ENCODE measurements at regions of chr13 and their contacts with region 1.

Region 1: DNA sequence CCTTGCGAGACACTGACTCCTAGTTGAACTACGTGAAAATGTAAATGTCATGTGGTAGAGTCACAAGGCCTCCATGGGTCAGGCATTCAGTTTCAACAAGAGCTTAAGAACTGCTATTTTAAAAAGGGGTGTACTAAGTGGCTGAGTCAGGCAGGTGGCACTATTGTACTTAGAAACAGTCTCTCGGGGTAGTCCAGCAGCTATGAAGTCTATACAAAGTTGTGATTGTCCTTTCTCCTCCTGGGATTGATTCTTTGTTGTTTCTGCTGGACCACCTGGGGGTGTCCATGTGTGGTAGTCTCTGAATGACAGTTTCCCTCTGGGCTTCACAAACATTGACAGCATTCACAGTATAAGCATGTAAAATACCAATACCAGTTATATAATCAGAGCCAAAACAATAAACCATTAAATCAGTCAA is 33.0 kb downstream of the UGGT2 start:
- DNase-seq: no peak
- ATAC-seq: peak; percentile 77 to 98 (median 91)
- H3K4me3 ChIP-seq: no peak overlapping the region
- H3K27ac ChIP-seq: no peak overlapping the region
- H3K4me1 ChIP-seq: no peaks in the 10 kb centered on the region
- H3K27me3 ChIP-seq: no peaks in the 10 kb centered on the region
- CTCF ChIP-seq: peak; percentile 63

Region 2: DNA sequence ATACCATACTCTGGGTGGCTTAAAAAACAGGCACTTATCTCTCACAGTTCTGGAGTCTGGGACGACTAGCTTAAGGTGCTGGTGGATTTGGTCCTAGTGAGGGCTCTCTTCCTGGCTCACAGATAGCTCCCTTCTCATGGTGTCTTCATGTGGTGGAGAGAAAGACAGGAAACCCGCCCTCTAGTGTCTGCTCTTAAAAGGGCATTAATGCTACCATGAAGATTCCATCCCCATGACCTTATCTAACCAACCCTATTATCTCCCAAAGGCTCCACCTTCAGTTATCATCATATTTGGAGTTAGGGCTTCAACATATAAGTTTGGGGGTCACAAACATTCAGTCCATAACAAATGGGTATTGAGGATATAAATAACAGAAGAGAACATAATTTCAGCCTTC is 209.2 kb after region 1 on chr13:
- intact Hi-C with region 1: loop called (anchors 5 to 10 kb)
- DNase-seq: no peak
- ATAC-seq: peak in 3 of 4 donors; percentile 65 to 68 (median 66)
- H3K4me3 ChIP-seq: no peak overlapping the region
- H3K27ac ChIP-seq: no peak overlapping the region
- H3K4me1 ChIP-seq: no peaks in the 10 kb centered on the region
- H3K27me3 ChIP-seq: no peaks in the 10 kb centered on the region
- CTCF ChIP-seq: peak; percentile 34

Region 3: GRCh38 chr13:96299236-96299635 is 279.1 kb after region 1 on chr13:
- intact Hi-C with region 1: no loop called
- DNase-seq: no peak
- ATAC-seq: no peak
- H3K4me3 ChIP-seq: no peak overlapping the region
- H3K27ac ChIP-seq: no peak overlapping the region
- H3K4me1 ChIP-seq: no peaks in the 10 kb centered on the region
- H3K27me3 ChIP-seq: no peaks in the 10 kb centered on the region
- CTCF ChIP-seq: no peak

Region 4: DNA sequence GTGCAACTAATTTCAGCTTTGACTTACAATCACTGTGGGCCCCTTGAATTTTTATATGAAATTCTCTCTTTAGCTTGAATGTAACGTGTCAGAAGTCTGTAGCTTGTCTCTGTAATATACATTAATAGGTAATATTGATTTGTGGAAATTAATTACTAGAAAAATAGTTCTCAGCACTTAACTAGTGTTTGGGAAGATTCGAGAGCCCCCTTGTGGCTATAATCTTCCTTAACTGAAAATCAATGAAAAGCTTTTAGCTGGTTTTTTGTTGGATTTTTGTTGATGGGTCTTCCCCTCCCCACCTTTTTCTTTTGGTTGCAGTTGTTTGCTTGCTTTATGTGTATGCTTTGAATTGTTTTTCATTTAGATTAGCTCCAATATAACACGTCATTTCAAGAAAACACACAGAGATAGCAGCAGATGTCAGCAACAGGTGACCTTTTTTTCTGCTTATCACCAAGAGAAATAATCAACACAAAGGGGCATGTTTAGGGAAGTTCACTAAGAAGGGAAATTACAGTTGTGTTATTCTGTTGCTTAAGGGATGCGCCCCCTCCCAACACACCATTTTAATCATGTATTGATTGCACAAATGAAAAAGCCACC is 797.3 kb after region 1 on chr13:
- intact Hi-C with region 1: loop called (anchors 10 kb)
- DNase-seq: no peak
- ATAC-seq: peak in 1 of 4 donors; percentile 30
- H3K4me3 ChIP-seq: no peak overlapping the region
- H3K27ac ChIP-seq: no peak overlapping the region
- H3K4me1 ChIP-seq: no peaks in the 10 kb centered on the region
- H3K27me3 ChIP-seq: no peaks in the 10 kb centered on the region
- CTCF ChIP-seq: peak; percentile 39

Region 5: DNA sequence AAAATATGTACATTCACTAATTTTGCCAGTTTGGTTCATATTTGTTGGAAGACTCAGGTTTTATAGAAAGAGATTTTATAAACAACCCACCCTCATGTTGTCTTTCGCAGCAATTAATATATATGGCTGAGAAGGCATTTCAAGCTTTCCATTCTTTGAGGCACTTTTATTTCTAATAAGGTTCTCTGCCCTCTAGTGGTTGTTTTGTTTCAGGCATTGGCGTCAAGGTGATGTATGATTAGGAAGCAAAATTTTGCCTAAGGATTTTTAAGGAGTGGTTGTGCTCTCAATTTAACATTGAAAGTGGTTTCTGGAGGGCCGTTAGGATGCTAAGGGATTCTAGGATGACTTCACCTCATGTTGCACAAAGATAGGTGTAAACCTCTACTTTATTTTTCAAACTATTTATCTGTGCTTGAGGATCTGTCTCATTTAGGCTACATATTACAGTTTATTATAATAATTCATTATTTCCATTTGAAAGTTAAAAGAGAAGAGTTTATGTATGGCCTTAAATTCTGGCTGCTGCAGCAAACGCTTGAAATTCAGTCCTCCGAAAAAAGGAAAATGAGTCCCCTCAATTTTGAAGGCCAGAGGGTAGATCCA is 938.2 kb after region 1 on chr13:
- intact Hi-C with region 1: loop called (anchors 5 kb)
- DNase-seq: no peak
- ATAC-seq: no peak
- H3K4me3 ChIP-seq: no peak overlapping the region
- H3K27ac ChIP-seq: no peak overlapping the region
- H3K4me1 ChIP-seq: no peaks in the 10 kb centered on the region
- H3K27me3 ChIP-seq: no peaks in the 10 kb centered on the region
- CTCF ChIP-seq: peak; percentile 55

Region 6: DNA sequence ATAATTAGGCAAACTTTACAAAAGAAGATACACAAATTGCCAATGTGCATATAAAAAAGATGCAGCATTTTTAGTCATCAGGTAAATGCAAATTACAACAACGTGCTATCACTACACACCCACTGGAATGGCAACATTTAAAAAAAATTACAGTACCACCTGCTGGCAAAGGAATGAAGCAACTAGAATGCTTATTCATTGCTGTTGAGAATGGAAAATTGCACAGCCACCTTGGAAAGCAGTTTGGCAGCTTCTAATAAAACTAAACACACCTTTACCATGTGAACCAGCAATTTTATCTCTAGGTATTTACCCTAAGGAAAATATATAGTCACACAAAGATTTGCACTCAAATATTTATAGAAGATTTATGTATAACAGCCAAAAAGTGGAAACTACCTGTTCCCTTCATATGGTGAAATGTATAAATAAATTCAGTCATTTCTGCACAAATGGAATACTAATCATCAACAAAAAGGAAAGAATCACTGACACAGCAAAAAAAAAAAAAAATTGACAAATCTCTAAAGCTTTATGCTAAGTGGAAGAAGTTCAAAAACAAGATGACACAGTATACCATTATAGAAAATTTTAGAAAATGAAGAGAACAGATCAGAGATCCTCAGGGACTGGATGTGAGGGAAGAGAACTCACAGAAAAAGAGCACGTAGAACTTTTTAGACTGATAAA is 943.8 kb after region 1 on chr13:
- intact Hi-C with region 1: loop called (anchors 5 kb)
- DNase-seq: no peak
- ATAC-seq: no peak
- H3K4me3 ChIP-seq: no peak overlapping the region
- H3K27ac ChIP-seq: no peak overlapping the region
- H3K4me1 ChIP-seq: no peaks in the 10 kb centered on the region
- H3K27me3 ChIP-seq: no peaks in the 10 kb centered on the region
- CTCF ChIP-seq: no peak